GM12878 (cell line): ENCODE measurements at regions of chr10 and their contacts with region 1.

Region 1: GRCh38 chr10:33330543-33331378 is 3.7 kb downstream of the NRP1 start:
- DNase-seq: peak; percentile 13
- ATAC-seq: peak; percentile 70
- H3K4me3 ChIP-seq: no peak overlapping the region
- H3K27ac ChIP-seq: no peak overlapping the region
- H3K4me1 ChIP-seq: no peaks in the 10 kb centered on the region
- H3K27me3 ChIP-seq: peaks cover 3% of the 10 kb centered on the region in 2 experiments; a peak in 2 of 4 replicates
- CTCF ChIP-seq: peak; percentile 77 to 88 (median 87)
- EP300 ChIP-seq: no peak
- POLR2A ChIP-seq: no peak
- RAD21 ChIP-seq: peak; percentile 87

Region 2: GRCh38 chr10:32471232-32471631 is 859.5 kb before region 1 on chr10:
- CTCF ChIA-PET with region 1: no interaction called
- POLR2A ChIA-PET with region 1: no interaction called
- RAD21 ChIA-PET with region 1: no interaction called
- SMC1A ChIA-PET with region 1: no interaction called
- in situ Hi-C with region 1: no loop called
- intact Hi-C with region 1: no loop called
- DNase-seq: no peak
- ATAC-seq: no peak
- H3K4me3 ChIP-seq: no peak overlapping the region
- H3K27ac ChIP-seq: no peak overlapping the region
- H3K4me1 ChIP-seq: no peaks in the 10 kb centered on the region
- H3K27me3 ChIP-seq: no peaks in the 10 kb centered on the region
- CTCF ChIP-seq: no peak
- EP300 ChIP-seq: no peak
- POLR2A ChIP-seq: no peak
- RAD21 ChIP-seq: no peak

Region 3: GRCh38 chr10:33193057-33193700 is 137.6 kb before region 1 on chr10:
- CTCF ChIA-PET with region 1: interaction called, 27 read pairs
- POLR2A ChIA-PET with region 1: interaction called, 3 read pairs
- RAD21 ChIA-PET with region 1: interaction called, 20 read pairs
- SMC1A ChIA-PET with region 1: interaction called, 28 read pairs
- in situ Hi-C with region 1: no loop called
- intact Hi-C with region 1: loop called (anchors 5 kb)
- DNase-seq: no peak
- ATAC-seq: peak; percentile 98
- H3K4me3 ChIP-seq: no peak overlapping the region
- H3K27ac ChIP-seq: no peak overlapping the region
- H3K4me1 ChIP-seq: no peaks in the 10 kb centered on the region
- H3K27me3 ChIP-seq: no peaks in the 10 kb centered on the region; a peak in 1 of 4 replicates
- CTCF ChIP-seq: peak; percentile 59 to 69 (median 66)
- EP300 ChIP-seq: no peak
- POLR2A ChIP-seq: no peak
- RAD21 ChIP-seq: peak; percentile 60

Region 4: DNA sequence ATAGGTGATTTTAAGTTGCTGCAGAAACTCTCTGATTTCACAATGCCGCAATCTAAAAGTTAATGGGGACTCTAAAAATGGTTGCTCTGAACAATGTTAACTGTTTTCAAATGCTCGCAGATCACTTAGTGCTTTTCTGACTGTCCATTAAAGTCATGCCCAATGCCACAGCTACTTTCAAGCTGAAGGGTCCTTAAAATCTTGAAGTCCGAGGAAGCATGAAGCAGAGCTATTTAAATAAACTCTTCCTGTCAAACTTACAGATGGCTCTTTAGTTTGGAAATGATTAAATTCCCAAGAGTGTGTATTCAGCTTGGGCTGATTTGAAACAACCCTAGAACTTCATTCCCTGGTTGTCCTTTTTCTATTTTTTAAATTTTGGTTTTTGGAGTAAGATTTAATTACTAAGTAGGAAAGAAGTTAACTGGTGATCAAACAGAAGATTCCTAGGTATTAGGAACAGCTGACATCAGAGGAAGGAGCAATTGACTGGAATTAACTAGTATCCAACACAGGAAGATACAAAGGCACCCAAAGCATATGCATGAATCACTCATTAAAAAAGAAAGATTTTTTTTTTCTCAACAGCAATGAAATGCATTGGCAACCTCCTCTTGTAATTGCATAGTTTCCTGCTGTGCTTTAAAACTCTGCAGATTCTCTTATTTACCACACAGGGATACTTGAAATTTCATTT is 101.4 kb before region 1 on chr10:
- CTCF ChIA-PET with region 1: no interaction called
- POLR2A ChIA-PET with region 1: no interaction called
- RAD21 ChIA-PET with region 1: no interaction called
- SMC1A ChIA-PET with region 1: no interaction called
- in situ Hi-C with region 1: no loop called
- intact Hi-C with region 1: no loop called
- DNase-seq: no peak
- ATAC-seq: no peak
- H3K4me3 ChIP-seq: no peak overlapping the region
- H3K27ac ChIP-seq: no peak overlapping the region
- H3K4me1 ChIP-seq: no peaks in the 10 kb centered on the region
- H3K27me3 ChIP-seq: no peaks in the 10 kb centered on the region
- CTCF ChIP-seq: no peak
- EP300 ChIP-seq: no peak
- POLR2A ChIP-seq: no peak
- RAD21 ChIP-seq: no peak

Region 5: GRCh38 chr10:33406596-33406995 is 75.8 kb after region 1 on chr10:
- CTCF ChIA-PET with region 1: no interaction called
- POLR2A ChIA-PET with region 1: no interaction called
- RAD21 ChIA-PET with region 1: no interaction called
- SMC1A ChIA-PET with region 1: no interaction called
- in situ Hi-C with region 1: no loop called
- intact Hi-C with region 1: no loop called
- DNase-seq: no peak
- ATAC-seq: no peak
- H3K4me3 ChIP-seq: no peak overlapping the region
- H3K27ac ChIP-seq: no peak overlapping the region
- H3K4me1 ChIP-seq: no peaks in the 10 kb centered on the region
- H3K27me3 ChIP-seq: no peaks in the 10 kb centered on the region
- CTCF ChIP-seq: no peak
- EP300 ChIP-seq: no peak
- POLR2A ChIP-seq: no peak
- RAD21 ChIP-seq: no peak

Region 6: DNA sequence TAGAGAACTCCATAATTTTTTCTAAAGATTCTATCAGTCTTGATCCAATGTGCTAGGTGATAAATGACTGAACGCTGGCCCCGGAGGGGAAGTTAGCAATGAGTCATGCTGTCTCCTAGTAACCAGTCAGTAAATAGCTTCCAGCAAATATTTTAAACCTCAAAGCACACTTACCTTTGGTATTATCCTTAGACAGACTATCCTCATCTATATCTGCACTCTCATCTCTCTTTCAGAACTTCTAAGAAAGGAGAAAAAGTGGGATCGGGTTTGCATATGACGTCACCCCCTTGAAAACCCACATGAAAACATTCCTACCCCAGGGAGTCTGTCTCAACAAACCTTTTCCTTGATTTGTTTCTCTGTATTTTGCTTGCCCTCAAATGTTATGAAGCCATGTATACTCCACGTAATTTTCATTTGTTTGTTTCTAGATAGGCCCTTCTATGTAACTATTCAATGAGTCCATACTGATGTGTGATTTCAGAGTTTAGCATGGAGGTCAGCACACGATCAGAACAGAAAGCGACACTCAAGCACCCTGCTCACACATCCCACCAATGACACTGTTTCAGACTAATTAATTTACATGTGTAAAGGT is 178.6 kb after region 1 on chr10:
- CTCF ChIA-PET with region 1: interaction called, 6 read pairs
- POLR2A ChIA-PET with region 1: interaction called, 3 read pairs
- RAD21 ChIA-PET with region 1: interaction called, 16 read pairs
- SMC1A ChIA-PET with region 1: interaction called, 4 read pairs
- in situ Hi-C with region 1: no loop called
- intact Hi-C with region 1: no loop called
- DNase-seq: peak; percentile 25
- ATAC-seq: peak; percentile 87
- H3K4me3 ChIP-seq: no peak overlapping the region
- H3K27ac ChIP-seq: no peak overlapping the region
- H3K4me1 ChIP-seq: no peaks in the 10 kb centered on the region
- H3K27me3 ChIP-seq: no peaks in the 10 kb centered on the region
- CTCF ChIP-seq: no peak
- EP300 ChIP-seq: peak; percentile 70 to 84; a peak in 3 of 4 replicates
- POLR2A ChIP-seq: no peak
- RAD21 ChIP-seq: no peak

Region 7: GRCh38 chr10:33735464-33735923 is 404.7 kb after region 1 on chr10:
- CTCF ChIA-PET with region 1: no interaction called
- POLR2A ChIA-PET with region 1: interaction called, 5 read pairs
- RAD21 ChIA-PET with region 1: interaction called, 4 read pairs
- SMC1A ChIA-PET with region 1: interaction called, 18 read pairs
- in situ Hi-C with region 1: no loop called
- intact Hi-C with region 1: no loop called
- DNase-seq: no peak
- ATAC-seq: peak; percentile 55
- H3K4me3 ChIP-seq: no peak overlapping the region
- H3K27ac ChIP-seq: no peak overlapping the region
- H3K4me1 ChIP-seq: no peaks in the 10 kb centered on the region
- H3K27me3 ChIP-seq: no peaks in the 10 kb centered on the region
- CTCF ChIP-seq: no peak
- EP300 ChIP-seq: no peak
- POLR2A ChIP-seq: no peak
- RAD21 ChIP-seq: no peak

Region 8: DNA sequence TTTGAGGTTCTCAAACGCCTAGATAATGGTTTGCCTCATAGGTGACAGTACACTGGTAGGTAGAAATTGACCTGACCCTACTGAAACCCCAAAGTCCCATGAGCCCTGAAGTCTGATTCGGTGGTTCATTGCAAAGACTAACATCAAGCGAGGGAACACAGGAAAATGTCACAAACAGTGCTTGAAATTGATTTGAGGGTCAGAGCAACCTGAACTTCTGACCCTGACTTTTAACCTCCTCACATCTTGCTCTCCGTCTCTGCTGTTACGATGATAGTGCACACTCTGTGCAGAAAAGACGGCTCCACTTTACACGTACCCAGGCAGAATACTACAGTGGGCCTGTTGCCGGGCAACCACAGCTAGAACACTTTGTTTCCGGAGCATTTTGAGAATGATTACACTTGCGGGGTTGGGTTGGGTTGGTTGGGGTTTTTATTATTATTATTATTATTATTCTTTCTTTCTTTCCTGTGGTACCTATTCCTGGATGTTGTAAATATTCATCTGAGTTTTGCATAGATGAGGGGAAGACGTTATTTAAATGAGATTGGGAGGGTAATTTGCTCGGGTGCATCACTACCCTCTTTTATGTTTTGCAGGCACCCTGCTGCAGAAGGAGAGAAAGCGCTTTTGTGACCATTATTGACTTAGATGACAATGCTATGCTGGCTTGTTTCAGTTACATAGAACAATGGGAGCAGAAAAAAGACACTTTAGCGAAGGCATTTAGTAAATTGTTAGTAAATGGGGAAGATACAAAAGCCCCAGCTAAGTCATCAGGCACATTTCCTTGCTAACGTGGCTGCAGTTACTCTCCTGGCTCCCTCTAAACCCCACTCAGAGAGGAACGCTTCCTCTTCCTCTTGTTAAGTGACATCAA is 441.9 kb after region 1 on chr10:
- CTCF ChIA-PET with region 1: interaction called, 7 read pairs
- POLR2A ChIA-PET with region 1: no interaction called
- RAD21 ChIA-PET with region 1: interaction called, 8 read pairs
- SMC1A ChIA-PET with region 1: interaction called, 12 read pairs
- in situ Hi-C with region 1: no loop called
- intact Hi-C with region 1: no loop called
- DNase-seq: no peak
- ATAC-seq: peak; percentile 77
- H3K4me3 ChIP-seq: no peak overlapping the region
- H3K27ac ChIP-seq: no peak overlapping the region
- H3K4me1 ChIP-seq: no peaks in the 10 kb centered on the region
- H3K27me3 ChIP-seq: no peaks in the 10 kb centered on the region
- CTCF ChIP-seq: no peak
- EP300 ChIP-seq: no peak
- POLR2A ChIP-seq: no peak
- RAD21 ChIP-seq: no peak

Region 9: DNA sequence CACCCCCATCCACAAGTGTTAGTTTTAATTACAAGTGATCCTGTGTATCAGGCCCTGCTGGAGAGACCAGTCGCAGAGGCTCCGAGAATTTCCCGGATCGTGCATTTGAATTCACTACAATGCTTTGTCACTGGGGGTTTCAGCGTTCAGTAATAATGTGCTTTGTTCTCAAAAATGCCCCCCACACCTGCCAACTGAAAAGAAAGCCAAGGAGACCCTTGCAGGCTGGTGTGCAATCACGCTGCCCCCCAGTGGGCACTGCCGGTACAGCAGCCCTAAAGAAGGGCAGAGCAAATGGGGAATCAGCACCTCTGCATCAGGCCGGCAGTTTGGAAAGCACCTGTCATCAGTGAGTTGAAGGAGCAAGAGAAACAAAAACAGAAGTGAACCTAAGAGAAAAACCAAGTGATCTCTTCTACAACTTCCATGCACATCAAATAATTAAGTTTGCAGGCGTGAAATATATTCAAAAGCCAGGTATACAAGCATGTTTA is 1306.7 kb after region 1 on chr10:
- CTCF ChIA-PET with region 1: interaction called, 81 read pairs
- POLR2A ChIA-PET with region 1: no interaction called
- RAD21 ChIA-PET with region 1: interaction called, 26 read pairs
- SMC1A ChIA-PET with region 1: interaction called, 52 read pairs
- in situ Hi-C with region 1: loop called (anchors 5 kb)
- intact Hi-C with region 1: loop called (anchors 1 kb)
- DNase-seq: peak; percentile 40
- ATAC-seq: peak; percentile 89
- H3K4me3 ChIP-seq: peak overlapping the region; percentile 7; the same call in 1 of the 2 replicates
- H3K27ac ChIP-seq: no peak overlapping the region
- H3K4me1 ChIP-seq: 0 out of 2 replicates have a peak, but pooled peaks cover 5% of the 10 kb centered on the region
- H3K27me3 ChIP-seq: no peaks in the 10 kb centered on the region
- CTCF ChIP-seq: peak; percentile 91 to 98 (median 97)
- EP300 ChIP-seq: peak in 1 of 2 experiments; percentile 42; a peak in 2 of 4 replicates
- POLR2A ChIP-seq: no peak
- RAD21 ChIP-seq: peak; percentile 75